Activated T-helper 2 cell treated with anti-CD3 and anti-CD28 coated beads, Interferon-gamma antibody, Interleukin-2, Interleukin-4, amounts not matched to agents 10 μg/mL and 5 μg/mL and 100 μg/mL, durations not matched to agents 14 hours and 24 hours and 36 hours (primary cell): ENCODE measurements at regions of chr14 and their contacts with region 1.

Region 1: DNA sequence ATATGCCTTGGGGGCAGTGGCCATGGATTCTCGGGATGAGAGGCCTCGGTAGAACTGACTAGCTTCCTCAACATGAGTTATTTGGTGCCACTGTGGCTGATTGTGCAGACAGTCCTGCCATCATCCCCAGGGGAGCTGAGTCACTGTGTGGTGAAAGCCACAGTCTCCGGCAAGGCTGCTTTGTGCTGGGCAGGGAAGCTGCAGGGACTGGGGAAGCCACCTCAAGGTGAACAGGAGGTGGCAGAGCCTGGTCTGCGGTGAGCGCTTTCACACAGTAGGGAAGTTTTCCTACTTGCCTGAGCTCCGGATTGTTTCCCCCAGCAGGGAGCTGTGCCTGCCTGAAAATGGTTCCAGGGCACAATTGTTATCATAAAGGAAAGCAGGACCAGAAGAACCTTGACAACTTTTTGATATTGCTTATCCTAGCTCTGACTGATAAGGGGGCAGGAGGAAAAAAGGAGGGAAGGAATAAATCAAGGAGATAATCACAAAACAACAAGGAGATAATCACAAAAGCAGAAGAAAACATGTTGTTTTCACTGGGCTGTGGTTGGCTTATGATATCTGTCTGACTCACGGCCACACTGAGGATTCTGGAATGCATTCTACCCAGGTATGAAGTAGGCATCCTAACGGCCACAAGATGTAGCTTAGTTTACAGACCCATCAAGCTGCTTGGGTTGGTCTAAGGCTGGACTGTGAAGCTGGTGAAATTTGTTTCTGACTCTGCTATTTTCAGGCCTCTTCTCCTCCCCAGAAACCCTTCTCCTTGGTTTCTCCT is 32.2 kb upstream of the GNG2 start:
- DNase-seq: peak; percentile 44
- H3K4me3 Mint-ChIP-seq: no peak overlapping the region
- H3K27ac Mint-ChIP-seq: no peak overlapping the region
- H3K4me1 Mint-ChIP-seq: peaks cover 4% of the 10 kb centered on the region
- H3K27me3 Mint-ChIP-seq: no peaks in the 10 kb centered on the region

Region 2: GRCh38 chr14:51873221-51873893 is 45.1 kb after region 1 on chr14:
- intact Hi-C with region 1: loop called (anchors 2 kb)
- DNase-seq: no peak
- H3K4me3 Mint-ChIP-seq: peak overlapping the region; percentile 22
- H3K27ac Mint-ChIP-seq: peak overlapping the region; percentile 85
- H3K4me1 Mint-ChIP-seq: peaks cover 54% of the 10 kb centered on the region
- H3K27me3 Mint-ChIP-seq: no peaks in the 10 kb centered on the region

Region 3: DNA sequence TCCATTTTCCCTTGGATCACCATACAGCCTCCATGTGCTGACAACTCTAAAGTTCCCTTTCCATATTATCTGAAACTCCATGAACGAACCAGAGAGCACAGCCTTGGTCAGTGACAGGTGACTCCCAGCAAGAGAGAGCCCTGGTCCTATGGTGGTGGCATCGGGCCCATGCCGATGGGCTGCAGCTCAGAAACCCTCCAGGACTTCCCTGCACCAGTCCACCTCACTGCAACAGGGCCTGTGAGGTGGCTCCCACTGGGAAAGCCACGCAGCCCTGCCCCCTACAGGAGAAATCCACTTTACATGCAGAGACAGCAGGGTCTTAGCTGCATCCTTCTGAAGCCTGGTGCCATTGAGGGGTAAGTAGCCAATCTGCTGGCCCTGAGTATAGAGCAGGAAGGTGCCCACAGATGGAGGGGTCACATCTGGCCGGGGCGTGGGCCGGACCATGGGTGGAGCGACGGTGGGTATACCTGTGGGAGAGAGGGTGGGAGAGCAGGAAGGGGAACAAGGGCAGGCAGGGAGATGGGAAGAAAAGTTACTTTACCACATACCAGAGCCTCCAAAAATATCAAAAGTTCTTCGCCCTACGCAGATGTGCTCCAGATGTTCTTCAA is 185.9 kb after region 1 on chr14:
- intact Hi-C with region 1: no loop called
- DNase-seq: no peak
- H3K4me3 Mint-ChIP-seq: no peak overlapping the region
- H3K27ac Mint-ChIP-seq: no peak overlapping the region
- H3K4me1 Mint-ChIP-seq: no peaks in the 10 kb centered on the region
- H3K27me3 Mint-ChIP-seq: peaks cover 3% of the 10 kb centered on the region